SK-N-SH (cell line): ENCODE measurements at regions of chr9 and their contacts with region 1.

Region 1: GRCh38 chr9:27276193-27277030 is 20.5 kb downstream of the EQTN start:
- DNase-seq: peak; percentile 60
- H3K4me3 ChIP-seq: no peak overlapping the region; a peak in 1 of 4 replicates
- H3K27ac ChIP-seq: no peak overlapping the region
- H3K4me1 ChIP-seq: no peaks in the 10 kb centered on the region; a peak in 1 of 4 replicates
- H3K27me3 ChIP-seq: no peaks in the 10 kb centered on the region; the same call in 1 of the 2 replicates
- CTCF ChIP-seq: peak; percentile 86
- EP300 ChIP-seq: no peak
- RAD21 ChIP-seq: peak; percentile 86

Region 2: GRCh38 chr9:27029186-27029585 is 247.2 kb before region 1 on chr9:
- CTCF ChIA-PET with region 1: interaction called, 18 read pairs
- POLR2A ChIA-PET with region 1: no interaction called
- DNase-seq: no peak
- H3K4me3 ChIP-seq: no peak overlapping the region
- H3K27ac ChIP-seq: no peak overlapping the region
- H3K4me1 ChIP-seq: no peaks in the 10 kb centered on the region
- H3K27me3 ChIP-seq: no peaks in the 10 kb centered on the region
- CTCF ChIP-seq: no peak
- EP300 ChIP-seq: no peak
- RAD21 ChIP-seq: no peak

Region 3: DNA sequence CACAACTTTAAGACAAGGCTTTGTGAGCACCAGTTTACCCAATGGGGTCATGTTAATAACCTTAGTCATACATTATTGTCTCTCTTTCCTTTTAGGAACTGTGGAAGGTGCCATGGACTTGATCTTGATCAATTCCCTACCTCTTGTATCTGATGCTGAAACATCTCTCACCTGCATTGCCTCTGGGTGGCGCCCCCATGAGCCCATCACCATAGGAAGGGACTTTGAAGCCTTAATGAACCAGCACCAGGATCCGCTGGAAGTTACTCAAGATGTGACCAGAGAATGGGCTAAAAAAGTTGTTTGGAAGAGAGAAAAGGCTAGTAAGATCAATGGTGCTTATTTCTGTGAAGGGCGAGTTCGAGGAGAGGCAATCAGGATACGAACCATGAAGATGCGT is 118.7 kb before region 1 on chr9:
- CTCF ChIA-PET with region 1: no interaction called
- POLR2A ChIA-PET with region 1: no interaction called
- DNase-seq: no peak
- H3K4me3 ChIP-seq: no peak overlapping the region
- H3K27ac ChIP-seq: no peak overlapping the region
- H3K4me1 ChIP-seq: peaks cover 0 to 6% of the 10 kb centered on the region in 2 experiments; a peak in 1 of 4 replicates
- H3K27me3 ChIP-seq: no peaks in the 10 kb centered on the region
- CTCF ChIP-seq: no peak
- EP300 ChIP-seq: no peak
- RAD21 ChIP-seq: no peak

Region 4: DNA sequence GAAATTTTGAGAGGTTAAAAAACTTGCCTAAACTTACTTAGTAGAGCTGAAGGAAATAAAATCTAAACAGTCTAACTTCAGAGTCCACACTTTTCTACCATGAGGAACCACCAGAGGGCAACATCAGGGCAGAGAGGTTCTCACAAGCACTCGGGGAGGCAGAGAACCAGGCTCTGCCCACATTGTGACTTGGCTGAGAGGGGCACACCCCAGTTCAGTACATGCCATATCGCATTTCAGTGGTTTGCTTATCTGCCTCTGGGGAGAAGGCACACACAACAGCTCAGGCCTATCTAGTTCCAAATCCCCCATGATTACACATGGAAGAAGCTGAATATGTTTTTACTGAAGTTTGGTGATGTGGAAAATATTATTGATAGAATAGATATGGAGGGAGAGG is 28.7 kb before region 1 on chr9:
- CTCF ChIA-PET with region 1: interaction called, 10 read pairs
- POLR2A ChIA-PET with region 1: no interaction called
- DNase-seq: peak; percentile 44
- H3K4me3 ChIP-seq: no peak overlapping the region
- H3K27ac ChIP-seq: no peak overlapping the region
- H3K4me1 ChIP-seq: no peaks in the 10 kb centered on the region; a peak in 1 of 4 replicates
- H3K27me3 ChIP-seq: no peaks in the 10 kb centered on the region
- CTCF ChIP-seq: peak; percentile 70
- EP300 ChIP-seq: no peak
- RAD21 ChIP-seq: peak; percentile 56

Region 5: DNA sequence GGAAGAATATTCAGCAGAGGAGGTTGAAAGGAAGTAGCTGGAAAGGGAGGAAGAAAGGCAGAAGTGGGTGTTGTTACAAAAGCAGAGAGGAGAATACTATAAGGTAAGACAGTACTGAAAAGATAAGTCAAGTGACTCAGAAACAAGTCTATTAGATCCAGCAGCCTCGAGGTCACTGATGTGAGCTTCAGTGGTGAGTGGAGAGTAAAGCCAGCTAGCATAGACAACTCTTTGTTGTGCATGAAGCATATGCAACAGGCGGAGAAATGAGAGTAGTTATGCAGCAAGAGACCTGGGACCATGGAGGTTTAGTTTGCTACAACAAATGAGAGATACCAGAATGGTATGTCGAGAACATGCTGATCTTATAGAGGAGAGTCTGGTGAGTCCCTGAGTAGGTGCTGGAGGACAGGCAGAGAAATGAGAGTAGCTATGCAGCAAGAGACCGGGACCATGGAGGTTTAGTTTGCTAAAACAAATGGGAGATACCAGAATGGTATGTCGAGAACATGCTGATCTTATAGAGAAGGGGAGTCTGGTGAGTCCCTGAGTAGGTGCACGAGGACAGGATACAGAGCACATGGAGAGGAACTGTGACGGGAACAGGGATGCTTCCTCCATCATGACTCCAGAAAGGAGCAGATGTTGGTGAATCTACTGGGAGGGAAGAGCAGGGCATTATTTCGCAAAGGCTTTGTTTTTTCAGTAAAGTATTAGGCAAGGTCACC is 15.5 kb before region 1 on chr9:
- CTCF ChIA-PET with region 1: interaction called, 20 read pairs
- POLR2A ChIA-PET with region 1: no interaction called
- DNase-seq: no peak
- H3K4me3 ChIP-seq: no peak overlapping the region
- H3K27ac ChIP-seq: no peak overlapping the region
- H3K4me1 ChIP-seq: no peaks in the 10 kb centered on the region
- H3K27me3 ChIP-seq: no peaks in the 10 kb centered on the region
- CTCF ChIP-seq: no peak
- EP300 ChIP-seq: no peak
- RAD21 ChIP-seq: no peak